Gastrocnemius medialis (tissue), 4 donors: ENCODE measurements at regions of chr9 and their contacts with region 1.

Region 1: GRCh38 chr9:84953797-84954705 is 284.5 kb downstream of the NTRK2 start:
- DNase-seq: peak; percentile 24 to 52
- ATAC-seq: peak; percentile 65 to 71
- H3K4me3 ChIP-seq: no peak overlapping the region
- H3K27ac ChIP-seq: no peak overlapping the region
- H3K4me1 ChIP-seq: peaks cover 0 to 3% of the 10 kb centered on the region in 2 donors
- H3K27me3 ChIP-seq: no peaks in the 10 kb centered on the region
- CTCF ChIP-seq: peak; percentile 56 to 81 (median 66)
- POLR2A ChIP-seq: no peak

Region 2: GRCh38 chr9:84404095-84404686 is 549.9 kb before region 1 on chr9:
- in situ Hi-C with region 1: loop called in 3 of 4 experiments (anchors 25 kb)
- intact Hi-C with region 1: loop called (anchors 10 kb)
- DNase-seq: no peak
- ATAC-seq: no peak
- H3K4me3 ChIP-seq: no peak overlapping the region
- H3K27ac ChIP-seq: no peak overlapping the region
- H3K4me1 ChIP-seq: no peaks in the 10 kb centered on the region
- H3K27me3 ChIP-seq: no peaks in the 10 kb centered on the region
- CTCF ChIP-seq: peak in 1 of 5 experiments; percentile 28
- POLR2A ChIP-seq: no peak

Region 3: GRCh38 chr9:84697509-84698114 is 256.4 kb before region 1 on chr9:
- in situ Hi-C with region 1: loop called in 1 of 4 experiments (anchors 10 kb)
- intact Hi-C with region 1: loop called (anchors 2 kb)
- DNase-seq: peak; percentile 15 to 18
- ATAC-seq: no peak
- H3K4me3 ChIP-seq: no peak overlapping the region
- H3K27ac ChIP-seq: no peak overlapping the region
- H3K4me1 ChIP-seq: no peaks in the 10 kb centered on the region
- H3K27me3 ChIP-seq: no peaks in the 10 kb centered on the region
- CTCF ChIP-seq: peak in 3 of 5 experiments; percentile 41 to 52 (median 47)
- POLR2A ChIP-seq: no peak

Region 4: GRCh38 chr9:84754461-84754860 is 199.6 kb before region 1 on chr9:
- in situ Hi-C with region 1: no loop called
- intact Hi-C with region 1: no loop called
- DNase-seq: no peak
- ATAC-seq: no peak
- H3K4me3 ChIP-seq: no peak overlapping the region
- H3K27ac ChIP-seq: no peak overlapping the region
- H3K4me1 ChIP-seq: peaks cover 0 to 4% of the 10 kb centered on the region in 2 donors
- H3K27me3 ChIP-seq: no peaks in the 10 kb centered on the region
- CTCF ChIP-seq: no peak
- POLR2A ChIP-seq: no peak

Region 5: GRCh38 chr9:84804951-84805694 is 148.9 kb before region 1 on chr9:
- in situ Hi-C with region 1: no loop called
- intact Hi-C with region 1: no loop called
- DNase-seq: no peak
- ATAC-seq: no peak
- H3K4me3 ChIP-seq: no peak overlapping the region
- H3K27ac ChIP-seq: no peak overlapping the region
- H3K4me1 ChIP-seq: no peaks in the 10 kb centered on the region
- H3K27me3 ChIP-seq: no peaks in the 10 kb centered on the region
- CTCF ChIP-seq: no peak
- POLR2A ChIP-seq: no peak